PC-3 (cell line): ENCODE measurements at regions of chr5 and their contacts with region 1.

Region 1: DNA sequence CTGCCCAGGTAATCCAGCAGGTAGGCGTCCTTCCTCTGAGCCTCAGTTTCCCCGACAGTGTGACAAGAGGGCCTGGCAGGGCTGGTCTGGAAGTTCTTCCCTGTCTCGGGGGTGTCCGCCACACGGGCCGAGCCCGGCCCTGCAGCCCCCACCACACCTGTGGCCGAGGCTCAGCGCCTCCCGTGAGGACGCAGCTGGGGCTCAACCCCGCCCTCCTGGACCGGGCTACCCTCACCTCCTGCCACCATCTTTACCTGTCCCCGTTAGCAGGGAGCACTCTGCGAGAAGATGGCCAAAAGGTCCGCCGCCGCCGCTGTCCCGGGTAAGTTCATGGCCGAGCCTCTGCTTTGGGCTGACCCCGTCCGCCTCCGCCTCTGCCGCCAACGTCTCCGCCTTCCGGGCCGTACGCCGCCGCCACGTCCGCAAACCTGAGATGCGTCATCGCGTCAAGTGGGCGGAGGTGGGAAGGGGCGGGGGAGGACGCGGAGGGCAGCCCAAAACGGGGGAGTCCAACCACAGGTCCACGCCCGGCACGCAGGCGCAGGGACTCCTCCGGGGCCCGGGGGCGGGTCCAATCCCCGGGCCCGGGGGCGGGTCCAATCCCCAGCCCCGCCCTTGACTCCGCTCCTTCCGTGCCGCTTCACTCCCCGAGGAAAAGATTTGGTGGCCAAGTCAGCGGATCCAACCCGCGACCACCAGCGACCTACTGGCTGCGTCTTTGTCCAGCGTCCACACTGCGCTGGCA is at the start of gene LYSMD3:
- DNase-seq: peak; percentile 99
- ATAC-seq: peak; percentile 90
- H3K4me3 ChIP-seq: peak within 1 kb of the TSS; percentile 85
- H3K27ac ChIP-seq: peak within 1 kb of the TSS; percentile 65
- H3K4me1 ChIP-seq: peaks cover 35% of the 10 kb centered on the region
- H3K27me3 ChIP-seq: no peaks in the 10 kb centered on the region
- CTCF ChIP-seq: no peak
- total RNA-seq, gene LYSMD3: 7.9 and 10.0 TPM in 2 replicates

Region 2: DNA sequence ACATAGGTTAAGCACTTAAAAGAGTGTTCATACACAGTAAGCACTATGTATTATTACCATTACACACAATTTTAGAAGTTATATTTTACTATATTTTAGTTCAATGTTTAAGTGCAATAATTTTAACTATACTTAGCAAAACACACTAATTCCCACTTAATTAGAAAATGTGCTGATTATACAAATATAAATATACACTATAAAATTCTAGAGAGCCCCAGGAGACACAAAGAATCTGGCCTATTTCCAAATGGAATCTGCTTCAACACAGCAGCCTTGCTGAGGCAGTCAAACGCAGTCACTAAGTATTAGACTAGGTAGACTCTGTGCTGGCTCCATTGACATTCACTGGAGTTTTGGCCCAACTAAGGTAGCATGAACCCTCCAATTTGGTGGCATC is 280.7 kb before region 1 on chr5:
- CTCF ChIA-PET with region 1: no interaction called
- POLR2A ChIA-PET with region 1: no interaction called
- intact Hi-C with region 1: no loop called
- DNase-seq: no peak
- ATAC-seq: no peak
- H3K4me3 ChIP-seq: no peak overlapping the region
- H3K27ac ChIP-seq: no peak overlapping the region
- H3K4me1 ChIP-seq: no peaks in the 10 kb centered on the region
- H3K27me3 ChIP-seq: no peaks in the 10 kb centered on the region
- CTCF ChIP-seq: no peak

Region 3: DNA sequence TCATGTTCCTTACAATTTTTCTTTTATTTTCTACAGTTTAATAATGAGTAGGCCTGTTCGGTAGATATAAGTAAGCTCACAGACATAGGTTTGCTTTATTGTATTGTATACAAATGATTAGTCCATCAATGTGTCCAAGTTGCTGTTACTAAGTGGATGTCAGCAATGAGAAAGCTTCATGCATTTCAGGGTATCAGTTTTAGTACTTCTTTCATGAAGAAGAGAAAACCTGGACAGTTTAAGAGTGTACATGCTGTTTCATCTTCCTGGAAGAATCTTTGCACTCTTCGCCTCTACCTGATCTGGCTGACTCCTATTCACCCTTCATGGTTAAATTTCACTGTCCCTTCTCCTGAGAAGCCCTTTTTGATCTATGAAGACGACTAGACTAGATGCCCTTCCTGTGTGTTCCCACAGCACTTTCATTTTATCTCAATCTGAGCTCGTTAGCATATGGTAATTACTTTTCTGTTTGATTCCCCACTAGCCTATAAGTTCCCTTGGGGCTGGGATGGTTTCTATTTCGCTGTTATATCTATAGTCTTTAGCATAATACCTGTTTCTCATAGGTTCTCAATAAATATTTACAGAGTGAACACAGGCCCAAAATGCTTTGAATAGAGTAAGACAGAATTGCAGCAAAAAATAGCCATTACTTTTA is 190.5 kb before region 1 on chr5:
- CTCF ChIA-PET with region 1: no interaction called
- POLR2A ChIA-PET with region 1: no interaction called
- intact Hi-C with region 1: no loop called
- DNase-seq: no peak
- ATAC-seq: no peak
- H3K4me3 ChIP-seq: no peak overlapping the region
- H3K27ac ChIP-seq: no peak overlapping the region
- H3K4me1 ChIP-seq: no peaks in the 10 kb centered on the region
- H3K27me3 ChIP-seq: no peaks in the 10 kb centered on the region
- CTCF ChIP-seq: no peak

Region 4: GRCh38 chr5:90474235-90475109 is 54.9 kb before region 1 on chr5 and contains the starts of genes MBLAC2 and POLR3G:
- CTCF ChIA-PET with region 1: interaction called, 7 read pairs
- POLR2A ChIA-PET with region 1: interaction called, 5 read pairs
- intact Hi-C with region 1: loop called (anchors 1 kb)
- DNase-seq: peak; percentile 95
- ATAC-seq: peak; percentile 76
- H3K4me3 ChIP-seq: peak within 1 kb of the TSS; percentile 94
- H3K27ac ChIP-seq: peak within 1 kb of the TSS; percentile 68
- H3K4me1 ChIP-seq: peaks cover 29% of the 10 kb centered on the region
- H3K27me3 ChIP-seq: no peaks in the 10 kb centered on the region
- CTCF ChIP-seq: peak; percentile 48
- total RNA-seq, gene MBLAC2: 7.8 and 12.4 TPM in 2 replicates
- total RNA-seq, gene POLR3G: 34.6 and 42.2 TPM in 2 replicates

Region 5: GRCh38 chr5:90518661-90519060 is 10.7 kb before region 1 on chr5:
- CTCF ChIA-PET with region 1: interaction called, 4 read pairs
- POLR2A ChIA-PET with region 1: no interaction called
- intact Hi-C with region 1: loop called (anchors 1 kb)
- DNase-seq: peak; percentile 80
- ATAC-seq: peak; percentile 78
- H3K4me3 ChIP-seq: peak overlapping the region; percentile 6; the same call in 1 of the 2 replicates
- H3K27ac ChIP-seq: peak overlapping the region; percentile 61
- H3K4me1 ChIP-seq: peaks cover 25% of the 10 kb centered on the region
- H3K27me3 ChIP-seq: no peaks in the 10 kb centered on the region
- CTCF ChIP-seq: no peak

Region 6: DNA sequence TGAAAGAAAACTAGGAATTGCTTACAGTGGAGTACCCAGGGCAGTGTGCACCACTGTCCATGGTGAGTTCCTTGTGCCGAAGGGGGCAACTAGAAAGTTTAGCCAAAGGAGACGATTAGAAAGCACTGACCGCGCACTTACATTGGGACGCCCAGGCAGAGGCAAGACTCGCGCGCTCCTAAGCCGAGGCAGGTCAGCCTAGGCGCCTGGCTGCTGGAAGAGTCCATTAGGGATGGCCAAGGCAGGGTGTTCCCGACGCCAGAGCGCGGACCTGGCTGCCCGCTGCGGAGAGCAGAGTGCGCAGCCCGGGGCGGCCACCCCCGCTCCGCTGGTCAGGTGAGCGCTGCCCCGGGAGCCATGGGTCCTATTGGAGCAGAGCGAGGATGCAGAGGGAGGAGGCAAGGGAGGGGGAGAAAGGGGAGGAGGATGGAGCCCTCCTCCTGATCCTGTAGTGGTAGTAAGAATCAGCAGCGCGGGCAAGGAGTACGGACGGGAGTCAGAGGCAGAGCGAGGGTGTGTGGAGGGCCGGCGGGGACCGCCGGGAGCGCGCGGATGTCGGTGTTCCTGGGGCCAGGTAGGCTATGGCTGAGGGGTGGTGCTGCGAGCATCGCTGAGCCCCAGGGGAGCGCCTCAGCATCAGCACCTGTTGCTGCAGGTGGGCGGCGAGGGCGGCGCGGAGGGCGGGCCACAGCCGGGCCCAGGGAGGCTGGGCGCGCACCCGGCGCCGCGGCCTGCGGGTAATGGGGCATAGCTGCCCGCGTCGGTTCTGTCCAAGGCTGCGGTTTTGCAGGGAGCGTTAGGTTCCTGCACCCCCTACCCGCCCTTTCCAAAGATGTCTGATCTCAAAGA is 29.2 kb after region 1 on chr5 and contains the start of gene ADGRV1:
- CTCF ChIA-PET with region 1: interaction called, 4 read pairs
- POLR2A ChIA-PET with region 1: no interaction called
- intact Hi-C with region 1: loop called (anchors 1 kb)
- DNase-seq: peak; percentile 99
- ATAC-seq: peak; percentile 88
- H3K4me3 ChIP-seq: peak within 1 kb of the TSS; percentile 73
- H3K27ac ChIP-seq: peak within 1 kb of the TSS; percentile 29
- H3K4me1 ChIP-seq: peaks cover 49% of the 10 kb centered on the region
- H3K27me3 ChIP-seq: no peaks in the 10 kb centered on the region
- CTCF ChIP-seq: no peak
- total RNA-seq, gene ADGRV1: 22.7 and 27.2 TPM in 2 replicates

Region 7: DNA sequence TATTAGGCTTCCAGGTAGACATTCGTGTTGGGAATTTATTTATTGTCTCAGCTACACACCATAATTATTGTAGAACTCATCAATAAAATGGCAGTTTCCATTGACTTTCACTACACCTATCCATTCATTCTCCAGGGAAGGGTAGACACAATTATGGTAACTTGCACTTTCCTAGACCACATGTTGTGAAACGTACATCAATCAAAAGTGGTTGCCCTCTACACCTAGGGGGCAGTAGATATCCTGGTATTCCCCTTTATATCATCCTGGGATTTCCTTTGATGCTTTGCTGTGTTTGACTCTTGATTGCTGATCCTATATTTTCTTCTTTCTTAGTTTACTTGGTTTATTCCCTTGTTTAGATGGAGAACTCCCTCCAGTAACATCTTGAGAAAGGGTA is 77.2 kb after region 1 on chr5:
- CTCF ChIA-PET with region 1: interaction called, 6 read pairs
- POLR2A ChIA-PET with region 1: no interaction called
- intact Hi-C with region 1: loop called (anchors 1 kb)
- DNase-seq: peak; percentile 53
- ATAC-seq: peak; percentile 45; the same call in 1 of the 2 replicates
- H3K4me3 ChIP-seq: no peak overlapping the region
- H3K27ac ChIP-seq: no peak overlapping the region
- H3K4me1 ChIP-seq: peaks cover 11% of the 10 kb centered on the region
- H3K27me3 ChIP-seq: no peaks in the 10 kb centered on the region
- CTCF ChIP-seq: peak; percentile 86

Region 8: GRCh38 chr5:90767710-90768109 is 238.3 kb after region 1 on chr5:
- CTCF ChIA-PET with region 1: no interaction called
- POLR2A ChIA-PET with region 1: no interaction called
- intact Hi-C with region 1: no loop called
- DNase-seq: peak; percentile 48
- ATAC-seq: peak; percentile 48; the same call in 1 of the 2 replicates
- H3K4me3 ChIP-seq: no peak overlapping the region
- H3K27ac ChIP-seq: no peak overlapping the region
- H3K4me1 ChIP-seq: peaks cover 17% of the 10 kb centered on the region
- H3K27me3 ChIP-seq: no peaks in the 10 kb centered on the region
- CTCF ChIP-seq: no peak